ENCODE measurements at regions of chr7 and their contacts with region 1.

Region 1: GRCh38 chr7:80060218-80060806 is 74.3 kb upstream of the GNAI1 start:
- DNase-seq: no peak
- H3K4me3 ChIP-seq: no peak overlapping the region
- H3K27ac ChIP-seq: no peak overlapping the region
- H3K4me1 ChIP-seq: no peaks in the 10 kb centered on the region
- H3K27me3 ChIP-seq: no peaks in the 10 kb centered on the region
- CTCF ChIP-seq: no peak

Region 2: GRCh38 chr7:80392229-80393169 is 332.2 kb after region 1 on chr7:
- intact Hi-C with region 1: loop called (anchors 2 kb)
- DNase-seq: no peak
- H3K4me3 ChIP-seq: no peak overlapping the region
- H3K27ac ChIP-seq: no peak overlapping the region
- H3K4me1 ChIP-seq: no peaks in the 10 kb centered on the region
- H3K27me3 ChIP-seq: no peaks in the 10 kb centered on the region
- CTCF ChIP-seq: peak; percentile 23

Region 3: GRCh38 chr7:80453699-80454340 is 393.5 kb after region 1 on chr7:
- intact Hi-C with region 1: loop called (anchors 5 kb)
- DNase-seq: no peak
- H3K4me3 ChIP-seq: no peak overlapping the region
- H3K27ac ChIP-seq: no peak overlapping the region
- H3K4me1 ChIP-seq: no peaks in the 10 kb centered on the region
- H3K27me3 ChIP-seq: no peaks in the 10 kb centered on the region
- CTCF ChIP-seq: peak; percentile 21